Common myeloid progenitor, CD34-positive (primary cell): ENCODE measurements at regions of chr11 and their contacts with region 1.

Region 1: DNA sequence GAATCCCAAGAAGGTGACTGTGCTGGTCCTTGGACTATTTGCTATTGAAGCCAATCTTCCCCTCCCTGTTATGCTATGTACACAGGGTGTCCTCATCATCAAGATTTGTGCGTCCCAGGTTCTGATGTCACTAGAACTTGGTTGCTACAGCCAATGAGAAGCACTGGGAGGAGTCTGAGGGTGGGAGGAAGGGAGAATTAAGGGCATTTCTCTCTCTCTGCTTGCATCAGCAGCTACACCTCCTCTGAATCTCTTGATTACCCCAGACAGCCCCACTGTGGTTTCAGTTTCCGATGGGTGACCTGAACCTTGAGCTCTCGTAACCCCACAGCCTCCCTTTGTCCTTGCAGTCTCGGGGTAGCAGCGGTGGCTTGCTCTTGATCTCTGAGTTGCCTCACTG is 212.4 kb upstream of the SESN3 start:
- DNase-seq: no peak
- H3K4me3 ChIP-seq: no peak overlapping the region
- H3K27ac ChIP-seq: no peak overlapping the region
- H3K4me1 ChIP-seq: no peaks in the 10 kb centered on the region
- H3K27me3 ChIP-seq: no peaks in the 10 kb centered on the region

Region 2: DNA sequence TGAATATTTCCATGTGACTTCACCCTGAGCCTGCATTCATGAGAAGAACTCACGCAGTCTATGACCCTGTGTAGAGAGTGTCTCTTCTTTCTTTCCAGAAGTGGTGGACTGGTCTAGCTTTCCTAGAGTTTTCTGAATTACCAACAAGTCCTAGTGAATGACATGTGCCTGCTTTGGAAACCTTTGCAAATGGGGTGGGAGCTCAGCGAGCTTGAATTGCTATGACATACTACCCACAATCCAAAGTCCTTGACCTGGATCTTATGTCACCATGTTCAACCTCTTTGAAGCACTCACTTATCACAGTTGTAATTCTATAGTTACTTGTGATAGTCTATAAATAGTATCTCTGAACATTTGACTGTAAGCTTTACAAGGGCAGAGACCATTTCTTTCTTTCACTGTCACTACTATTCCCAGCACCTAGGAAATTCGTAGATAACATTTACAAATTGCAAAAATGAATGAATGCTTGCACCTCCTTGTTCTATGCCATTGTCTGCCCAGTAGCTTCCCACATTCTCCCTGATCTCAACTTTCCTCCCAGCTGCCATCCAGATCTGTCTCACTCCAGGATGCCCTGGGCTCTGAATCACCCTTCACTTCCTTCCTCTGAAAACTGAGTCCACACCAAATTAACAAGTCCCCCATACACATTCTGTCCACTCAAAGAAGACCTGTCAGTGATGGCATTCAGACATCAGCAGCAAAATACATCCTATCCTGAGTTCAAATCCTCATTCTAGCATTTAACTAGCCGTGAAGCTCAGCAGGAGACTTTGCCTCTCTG is 10.5 kb before region 1 on chr11:
- CTCF ChIA-PET with region 1: interaction called, 12 read pairs
- POLR2A ChIA-PET with region 1: no interaction called
- DNase-seq: no peak
- H3K4me3 ChIP-seq: no peak overlapping the region
- H3K27ac ChIP-seq: no peak overlapping the region
- H3K4me1 ChIP-seq: peaks cover 0 to 3% (median 0%) of the 10 kb centered on the region in 4 experiments
- H3K27me3 ChIP-seq: no peaks in the 10 kb centered on the region

Region 3: DNA sequence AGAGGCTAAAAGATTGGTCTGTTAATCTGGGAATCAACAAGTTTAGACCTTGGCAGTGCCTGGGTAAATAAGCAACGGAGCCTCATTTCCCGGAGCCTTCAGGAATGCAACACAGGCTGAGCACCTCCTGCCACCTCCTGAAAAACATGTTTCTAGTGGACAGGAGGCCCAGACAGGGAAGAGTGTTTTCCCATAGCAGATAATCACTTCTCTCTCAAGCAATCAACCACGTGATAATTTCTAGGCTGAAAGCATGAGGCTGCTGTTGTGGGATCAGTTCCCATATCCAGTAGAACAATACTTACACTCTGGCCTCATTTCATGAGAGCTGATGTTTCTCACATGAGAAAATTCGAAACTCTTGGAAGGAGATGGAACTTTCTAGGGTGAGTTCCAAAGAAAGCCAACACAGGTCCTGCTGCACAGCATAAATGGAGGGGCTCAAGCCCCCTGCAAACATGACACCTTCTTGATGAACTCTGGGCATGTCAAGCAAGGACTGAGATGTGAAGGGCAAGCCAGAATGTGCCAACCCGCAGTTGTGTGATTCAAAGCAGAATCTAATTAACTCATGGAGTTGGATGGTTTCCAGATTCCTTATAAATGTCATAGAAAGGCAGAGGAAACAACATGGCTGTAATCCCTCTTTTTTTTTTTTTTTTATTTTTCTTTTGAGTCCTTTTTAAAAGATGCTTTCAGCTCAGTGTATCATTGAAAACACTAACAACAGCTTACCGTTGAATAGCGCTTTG is 16.1 kb after region 1 on chr11:
- CTCF ChIA-PET with region 1: no interaction called
- POLR2A ChIA-PET with region 1: no interaction called
- DNase-seq: no peak
- H3K4me3 ChIP-seq: no peak overlapping the region
- H3K27ac ChIP-seq: no peak overlapping the region
- H3K4me1 ChIP-seq: peaks cover 0 to 6% (median 0%) of the 10 kb centered on the region in 4 experiments
- H3K27me3 ChIP-seq: no peaks in the 10 kb centered on the region